ENCODE measurements at regions of chr6 and their contacts with region 1.

Region 1: DNA sequence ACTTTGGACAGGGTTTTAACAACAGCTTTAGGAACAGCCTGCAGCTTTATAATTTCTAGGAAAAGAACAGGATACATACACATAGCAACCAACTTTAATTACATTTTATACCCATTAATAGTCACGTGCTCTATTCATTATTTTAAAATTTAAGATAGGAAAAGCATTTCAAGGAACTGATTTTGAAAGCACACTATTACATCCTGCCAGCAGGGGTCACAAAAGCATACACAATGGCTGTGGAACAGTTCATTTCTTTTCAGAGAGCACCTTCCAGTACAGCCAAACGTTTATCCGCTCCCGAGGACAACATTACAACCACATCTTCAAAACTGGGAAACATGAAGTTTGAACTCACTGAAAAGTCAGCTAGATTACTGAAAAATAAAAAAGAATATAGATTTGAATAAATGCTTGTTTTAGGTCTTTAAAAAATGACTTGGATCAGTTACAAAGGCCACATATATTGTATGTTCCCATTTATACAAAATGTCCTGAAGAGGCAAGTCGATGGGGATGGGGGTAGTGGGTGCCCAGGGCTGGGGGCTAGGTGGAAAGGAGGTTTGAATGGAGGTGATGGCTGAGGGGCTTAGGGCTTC is 104.6 kb upstream of the EXOC2 start:
- DNase-seq: no peak
- ATAC-seq: peak; percentile 50
- H3K4me3 Mint-ChIP-seq: no peak overlapping the region
- H3K27ac Mint-ChIP-seq: no peak overlapping the region
- H3K4me1 Mint-ChIP-seq: peaks cover 13% of the 10 kb centered on the region
- H3K27me3 Mint-ChIP-seq: peaks cover 23% of the 10 kb centered on the region
- CTCF ChIP-seq: peak; percentile 91

Region 2: GRCh38 chr6:658244-658643 is 139.3 kb before region 1 on chr6:
- CTCF ChIA-PET with region 1: no interaction called
- POLR2A ChIA-PET with region 1: no interaction called
- intact Hi-C with region 1: no loop called
- DNase-seq: no peak
- ATAC-seq: no peak
- H3K4me3 Mint-ChIP-seq: no peak overlapping the region
- H3K27ac Mint-ChIP-seq: no peak overlapping the region
- H3K4me1 Mint-ChIP-seq: peaks cover 48% of the 10 kb centered on the region
- H3K27me3 Mint-ChIP-seq: no peaks in the 10 kb centered on the region
- CTCF ChIP-seq: no peak

Region 3: GRCh38 chr6:1335367-1336037 is 537.9 kb after region 1 on chr6:
- CTCF ChIA-PET with region 1: no interaction called
- POLR2A ChIA-PET with region 1: no interaction called
- intact Hi-C with region 1: loop called (anchors 1 kb)
- DNase-seq: no peak
- ATAC-seq: no peak
- H3K4me3 Mint-ChIP-seq: no peak overlapping the region
- H3K27ac Mint-ChIP-seq: no peak overlapping the region
- H3K4me1 Mint-ChIP-seq: no peaks in the 10 kb centered on the region
- H3K27me3 Mint-ChIP-seq: peaks cover 33% of the 10 kb centered on the region
- CTCF ChIP-seq: no peak

Region 4: GRCh38 chr6:1396952-1397868 is 599.6 kb after region 1 on chr6:
- CTCF ChIA-PET with region 1: interaction called, 19 read pairs
- POLR2A ChIA-PET with region 1: no interaction called
- intact Hi-C with region 1: loop called (anchors 1 kb)
- DNase-seq: peak; percentile 67
- ATAC-seq: peak; percentile 58
- H3K4me3 Mint-ChIP-seq: no peak overlapping the region
- H3K27ac Mint-ChIP-seq: no peak overlapping the region
- H3K4me1 Mint-ChIP-seq: peaks cover 8% of the 10 kb centered on the region
- H3K27me3 Mint-ChIP-seq: peaks cover 48% of the 10 kb centered on the region
- CTCF ChIP-seq: peak; percentile 90

Region 5: DNA sequence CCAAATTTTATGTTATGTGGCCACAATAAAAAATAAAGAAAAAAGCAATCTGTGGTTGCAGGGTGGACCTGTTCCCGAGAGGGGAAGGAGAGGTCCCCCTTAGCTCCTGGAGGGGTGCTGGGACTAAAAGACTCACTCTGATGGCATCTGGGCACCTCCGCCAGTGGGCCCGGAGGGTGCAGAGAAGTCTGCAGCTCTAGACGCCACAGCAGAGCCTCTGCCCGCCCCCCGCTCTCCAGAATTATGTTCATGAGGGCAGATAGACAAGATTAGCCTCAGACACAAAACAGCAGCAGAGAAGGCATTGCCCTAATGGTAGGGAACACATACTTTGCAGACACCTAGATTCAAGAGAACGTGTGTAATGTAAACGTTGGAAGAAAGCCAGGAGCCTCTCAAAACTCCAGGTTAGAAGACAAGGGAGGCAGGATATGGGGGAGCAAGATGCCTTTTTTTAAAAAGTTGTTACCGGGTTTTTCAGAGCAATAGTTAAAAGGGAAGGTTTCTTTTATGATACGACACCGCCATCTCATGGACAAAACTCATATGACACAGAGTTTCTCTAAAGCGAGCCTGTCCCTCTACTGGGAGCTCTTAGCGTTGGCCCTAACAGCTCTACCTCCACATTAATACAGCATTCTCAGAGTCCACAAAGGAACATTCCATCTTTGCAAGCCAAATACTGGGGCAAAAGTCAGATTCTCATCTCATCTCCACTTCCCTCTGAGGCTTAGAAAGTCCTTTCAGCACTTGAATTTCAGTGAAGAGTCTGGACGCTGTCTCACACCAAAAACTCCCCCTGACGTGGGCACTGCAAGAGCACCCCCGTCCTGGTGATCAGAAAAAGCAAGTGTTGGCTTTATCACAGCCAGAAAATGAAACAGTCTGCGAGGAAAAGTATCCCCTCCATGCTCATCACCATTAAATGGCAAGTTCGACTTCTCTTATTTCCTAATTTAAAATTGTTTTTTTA is 639.0 kb after region 1 on chr6:
- CTCF ChIA-PET with region 1: interaction called, 14 read pairs
- POLR2A ChIA-PET with region 1: no interaction called
- intact Hi-C with region 1: loop called (anchors 1 kb)
- DNase-seq: no peak
- ATAC-seq: peak; percentile 71
- H3K4me3 Mint-ChIP-seq: no peak overlapping the region
- H3K27ac Mint-ChIP-seq: no peak overlapping the region
- H3K4me1 Mint-ChIP-seq: no peaks in the 10 kb centered on the region
- H3K27me3 Mint-ChIP-seq: peaks cover 43% of the 10 kb centered on the region
- CTCF ChIP-seq: no peak

Measured in activated B cell treated with CpG ODN at 0.5 μM for 24 hours (primary cell).